Spleen (tissue), 13 donors: ENCODE measurements at regions of chr13 and their contacts with region 1.

Region 1: GRCh38 chr13:109786457-109787134 is at the start of gene IRS2:
- DNase-seq: peak; percentile 98
- H3K4me3 ChIP-seq: peak within 1 kb of the TSS; percentile 62 to 91 (median 75)
- H3K27ac ChIP-seq: peak within 1 kb of the TSS; percentile 48 to 96 (median 88)
- H3K4me1 ChIP-seq: peaks cover 5 to 80% (median 32%) of the 10 kb centered on the region in 6 donors
- H3K27me3 ChIP-seq: peaks cover 0 to 55% (median 5%) of the 10 kb centered on the region in 7 donors
- CTCF ChIP-seq: no peak
- POLR2A ChIP-seq: peak; percentile 77 to 98 (median 94)
- total RNA-seq, gene IRS2: 8.2 to 31.3 (median 17.5) TPM

Region 2: DNA sequence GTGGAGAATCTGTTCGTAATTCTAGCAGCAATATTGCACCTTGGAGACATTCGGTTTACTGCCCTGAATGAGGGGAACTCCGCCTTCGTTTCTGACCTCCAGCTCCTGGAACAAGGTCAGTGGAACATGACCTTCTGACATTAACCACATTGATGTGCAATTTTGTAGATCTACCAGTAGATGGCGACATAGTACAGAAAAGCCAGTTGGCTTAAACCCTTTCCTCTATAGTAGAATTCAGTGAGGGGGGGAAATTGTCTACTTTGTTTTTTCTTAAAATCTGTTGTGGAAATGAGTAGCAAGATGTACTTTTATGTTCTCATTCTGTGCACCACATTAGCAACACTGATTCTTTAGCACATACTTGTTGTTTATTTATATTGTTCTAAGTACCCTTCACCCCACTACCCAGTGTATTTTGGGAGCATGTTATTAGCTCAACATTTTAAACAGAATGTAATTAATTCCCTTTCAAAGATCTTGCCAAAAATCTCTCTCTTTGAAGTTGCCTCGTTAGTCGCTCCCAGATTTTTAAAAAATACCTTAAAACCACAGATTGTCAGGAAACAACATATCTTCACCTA is 825.0 kb before region 1 on chr13:
- intact Hi-C with region 1: loop called (anchors 5 kb)
- DNase-seq: no peak
- H3K4me3 ChIP-seq: no peak overlapping the region
- H3K27ac ChIP-seq: no peak overlapping the region
- H3K4me1 ChIP-seq: peaks cover 0 to 6% (median 0%) of the 10 kb centered on the region in 6 donors
- H3K27me3 ChIP-seq: no peaks in the 10 kb centered on the region
- CTCF ChIP-seq: peak; percentile 55 to 91 (median 81)
- POLR2A ChIP-seq: no peak

Region 3: GRCh38 chr13:109145631-109146030 is 641.0 kb before region 1 on chr13:
- intact Hi-C with region 1: loop called (anchors 10 kb)
- DNase-seq: no peak
- H3K4me3 ChIP-seq: no peak overlapping the region
- H3K27ac ChIP-seq: no peak overlapping the region
- H3K4me1 ChIP-seq: peaks cover 0 to 5% (median 0%) of the 10 kb centered on the region in 6 donors
- H3K27me3 ChIP-seq: peaks cover 0 to 53% (median 12%) of the 10 kb centered on the region in 7 donors
- CTCF ChIP-seq: peak in 8 of 11 experiments; percentile 31 to 64 (median 55)
- POLR2A ChIP-seq: no peak

Region 4: GRCh38 chr13:109840201-109840892 is 53.8 kb after region 1 on chr13:
- intact Hi-C with region 1: no loop called
- DNase-seq: no peak
- H3K4me3 ChIP-seq: no peak overlapping the region
- H3K27ac ChIP-seq: no peak overlapping the region
- H3K4me1 ChIP-seq: no peaks in the 10 kb centered on the region
- H3K27me3 ChIP-seq: peaks cover 0 to 50% (median 0%) of the 10 kb centered on the region in 7 donors
- CTCF ChIP-seq: no peak
- POLR2A ChIP-seq: no peak

Region 5: GRCh38 chr13:110037925-110038573 is 251.5 kb after region 1 on chr13:
- intact Hi-C with region 1: no loop called
- DNase-seq: no peak
- H3K4me3 ChIP-seq: no peak overlapping the region
- H3K27ac ChIP-seq: no peak overlapping the region
- H3K4me1 ChIP-seq: no peaks in the 10 kb centered on the region
- H3K27me3 ChIP-seq: peaks cover 0 to 14% (median 0%) of the 10 kb centered on the region in 7 donors
- CTCF ChIP-seq: no peak
- POLR2A ChIP-seq: no peak